Left ventricle myocardium inferior (tissue), 1 donor: ENCODE measurements at regions of chr1 and their contacts with region 1.

Region 1: DNA sequence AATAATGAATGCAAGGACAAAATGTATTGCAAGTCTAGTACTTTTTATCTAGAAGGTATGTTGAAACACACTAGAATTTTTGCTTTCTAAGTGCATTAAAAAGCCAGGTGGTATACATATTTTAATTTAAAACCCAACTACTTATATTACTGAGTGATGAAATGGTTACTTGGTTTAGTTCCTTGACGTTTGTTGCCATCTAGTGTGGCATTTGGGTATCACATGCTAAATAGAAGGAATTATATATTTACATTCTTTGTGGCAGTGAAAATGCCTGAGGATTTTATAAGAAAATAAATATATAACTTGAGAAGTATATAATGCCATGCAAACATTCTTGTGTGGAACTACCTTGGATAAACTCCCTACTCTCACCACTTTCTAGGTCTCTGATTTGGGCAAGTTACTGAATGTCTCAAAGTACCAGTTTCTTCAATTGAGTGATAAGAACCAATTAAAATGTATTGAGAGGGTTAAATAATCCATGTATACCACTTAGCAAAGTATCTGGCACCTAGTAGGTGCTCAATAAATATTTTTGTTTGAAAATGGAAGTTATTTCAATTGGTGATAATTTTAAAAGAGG is 69.6 kb downstream of the SDCCAG8 start:
- DNase-seq: no peak
- H3K4me3 ChIP-seq: no peak overlapping the region
- H3K27ac ChIP-seq: no peak overlapping the region
- H3K4me1 ChIP-seq: no peaks in the 10 kb centered on the region
- H3K27me3 ChIP-seq: no peaks in the 10 kb centered on the region
- CTCF ChIP-seq: peak; percentile 88

Region 2: DNA sequence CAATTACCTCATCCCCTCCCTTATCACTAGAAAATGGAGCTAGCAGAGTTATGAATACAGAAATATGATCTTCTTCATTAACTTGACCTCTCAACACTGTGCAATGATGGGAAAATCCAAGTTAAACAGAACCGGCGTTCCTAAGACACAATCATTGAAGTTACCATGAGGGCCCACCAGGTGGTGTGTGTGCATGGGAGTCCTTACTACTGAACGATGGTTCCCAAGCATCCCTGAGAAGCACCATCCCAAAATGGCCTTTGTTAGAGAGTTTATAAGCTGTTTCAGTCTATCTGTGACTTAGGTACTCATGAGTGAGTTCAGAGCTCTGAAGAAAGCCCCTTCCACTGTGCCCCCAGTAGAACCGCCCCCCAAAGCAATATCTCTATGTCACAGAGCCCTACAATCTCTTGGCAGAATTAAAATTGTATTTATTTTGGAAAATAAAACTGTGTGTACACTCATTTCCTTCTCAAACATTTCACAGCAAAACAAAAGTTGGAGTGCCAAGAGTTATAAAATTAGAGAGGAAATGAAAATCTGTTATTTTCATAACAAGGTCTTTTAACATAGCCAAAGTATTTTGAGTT is 857.7 kb before region 1 on chr1:
- intact Hi-C with region 1: loop called (anchors 10 kb)
- DNase-seq: peak; percentile 21
- H3K4me3 ChIP-seq: no peak overlapping the region
- H3K27ac ChIP-seq: no peak overlapping the region
- H3K4me1 ChIP-seq: no peaks in the 10 kb centered on the region
- H3K27me3 ChIP-seq: peaks cover 13% of the 10 kb centered on the region
- CTCF ChIP-seq: peak; percentile 71

Region 3: DNA sequence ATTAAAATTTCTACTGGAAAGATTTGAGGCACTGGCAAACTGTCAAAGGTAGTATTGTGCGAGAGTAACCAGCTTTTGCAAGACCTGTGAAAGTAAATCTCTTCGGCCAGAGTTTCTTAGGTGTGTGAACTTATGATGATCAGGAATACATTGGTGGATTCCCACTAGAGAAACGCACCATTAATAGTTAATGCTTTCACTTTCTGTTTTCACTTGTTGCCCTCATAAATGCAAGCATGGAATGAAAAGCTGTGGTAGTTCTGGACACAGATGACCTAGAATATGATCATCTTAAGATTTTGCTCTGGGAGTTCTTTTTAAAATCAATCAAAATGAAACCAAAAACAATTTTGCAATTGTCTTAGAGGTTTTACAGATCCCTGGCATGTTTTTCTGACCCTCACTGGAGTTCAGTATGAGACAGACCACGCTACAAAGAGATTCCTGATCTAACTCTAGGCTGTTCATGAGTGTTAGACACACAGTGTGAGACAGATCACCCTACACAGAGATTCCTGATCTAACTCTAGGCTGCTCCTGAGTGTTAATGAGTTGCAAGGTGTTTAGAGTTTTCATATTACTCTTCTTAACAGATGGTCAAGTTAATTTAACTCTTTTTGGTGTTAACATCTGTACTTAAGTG is 29.2 kb after region 1 on chr1:
- intact Hi-C with region 1: no loop called
- DNase-seq: no peak
- H3K4me3 ChIP-seq: peak overlapping the region; percentile 46
- H3K27ac ChIP-seq: peak overlapping the region; percentile 29
- H3K4me1 ChIP-seq: peaks cover 6% of the 10 kb centered on the region
- H3K27me3 ChIP-seq: no peaks in the 10 kb centered on the region
- CTCF ChIP-seq: no peak

Region 4: GRCh38 chr1:243390162-243390791 is 64.9 kb after region 1 on chr1:
- intact Hi-C with region 1: no loop called
- DNase-seq: no peak
- H3K4me3 ChIP-seq: no peak overlapping the region
- H3K27ac ChIP-seq: no peak overlapping the region
- H3K4me1 ChIP-seq: no peaks in the 10 kb centered on the region
- H3K27me3 ChIP-seq: no peaks in the 10 kb centered on the region
- CTCF ChIP-seq: no peak